ENCODE measurements at regions of chr16 and their contacts with region 1.

Region 1: GRCh38 chr16:46607529-46607928 is 13.7 kb downstream of the SHCBP1 start:
- DNase-seq: no peak
- H3K4me3 Mint-ChIP-seq: no peak overlapping the region
- H3K27ac Mint-ChIP-seq: no peak overlapping the region
- H3K4me1 Mint-ChIP-seq: no peaks in the 10 kb centered on the region
- H3K27me3 Mint-ChIP-seq: no peaks in the 10 kb centered on the region

Region 2: DNA sequence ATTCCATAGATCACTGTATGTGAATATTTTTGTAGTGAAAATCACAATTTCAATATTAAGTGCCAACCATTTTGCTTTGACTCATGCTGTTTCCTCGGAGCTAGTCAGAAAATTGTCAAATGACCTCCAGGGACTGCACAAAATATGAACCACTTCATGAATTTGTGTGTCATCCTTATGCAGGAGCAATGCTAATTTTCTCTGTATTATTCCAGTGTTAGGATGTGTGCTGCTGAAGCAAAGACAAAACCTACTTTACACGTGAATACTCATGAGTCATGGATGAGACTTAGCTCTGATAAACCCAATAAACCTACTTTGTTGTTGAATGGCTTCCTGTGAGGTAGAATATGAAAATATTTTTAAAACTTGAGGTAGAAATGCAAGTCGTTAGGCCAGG is 51.6 kb before region 1 on chr16:
- CTCF ChIA-PET with region 1: interaction called, 10 read pairs
- POLR2A ChIA-PET with region 1: no interaction called
- DNase-seq: no peak
- H3K4me3 Mint-ChIP-seq: no peak overlapping the region
- H3K27ac Mint-ChIP-seq: no peak overlapping the region
- H3K4me1 Mint-ChIP-seq: no peaks in the 10 kb centered on the region
- H3K27me3 Mint-ChIP-seq: peaks cover 10% of the 10 kb centered on the region

Region 3: GRCh38 chr16:46568472-46569230 is 38.9 kb before region 1 on chr16:
- CTCF ChIA-PET with region 1: no interaction called
- POLR2A ChIA-PET with region 1: no interaction called
- DNase-seq: no peak
- H3K4me3 Mint-ChIP-seq: no peak overlapping the region
- H3K27ac Mint-ChIP-seq: no peak overlapping the region
- H3K4me1 Mint-ChIP-seq: peaks cover 7% of the 10 kb centered on the region
- H3K27me3 Mint-ChIP-seq: peaks cover 9% of the 10 kb centered on the region

Region 4: DNA sequence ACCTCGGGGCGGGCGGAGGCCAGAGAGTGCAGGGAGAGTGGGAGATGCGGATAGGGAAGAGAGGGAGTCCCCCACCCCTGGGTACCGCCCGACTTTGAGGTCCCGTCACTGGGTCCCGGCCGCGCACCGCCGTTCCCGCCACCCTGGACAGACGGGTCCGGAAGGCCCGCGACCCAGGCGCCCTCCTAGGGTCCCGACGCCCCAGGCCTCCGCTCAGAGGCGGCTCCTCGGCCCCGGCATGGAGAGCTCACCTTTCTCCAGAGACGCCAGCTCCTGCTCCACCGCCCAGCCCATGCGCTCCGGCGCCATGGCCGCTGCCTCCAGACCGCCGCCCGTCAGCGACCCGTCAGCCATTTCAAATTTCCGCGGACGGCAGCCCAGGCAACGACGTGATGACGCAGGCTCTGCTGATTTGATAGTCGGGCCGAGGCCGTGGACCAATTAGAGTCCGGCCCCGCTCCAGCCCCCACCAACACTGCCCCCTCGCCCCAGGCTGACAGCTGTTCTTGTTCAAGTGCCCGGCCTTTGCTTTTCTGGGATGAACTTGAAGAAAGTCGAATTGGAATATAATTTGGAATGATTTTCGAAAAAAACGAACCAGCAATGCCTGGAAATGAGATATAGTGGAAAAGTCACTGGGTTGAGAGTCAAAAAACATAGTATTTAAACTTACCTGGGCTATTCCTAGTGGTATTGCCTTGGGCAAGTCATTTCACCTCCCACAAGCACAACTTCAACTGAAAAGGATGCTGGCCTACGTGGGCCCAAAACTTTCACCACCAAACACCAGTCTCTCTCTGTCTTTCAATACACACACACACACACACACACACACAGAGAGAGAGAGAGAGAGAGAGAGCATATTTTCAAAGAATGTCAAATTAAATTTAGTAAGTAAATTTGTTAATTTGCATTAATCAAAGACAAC is 13.7 kb after region 1 on chr16 and contains the start of gene SHCBP1:
- CTCF ChIA-PET with region 1: interaction called, 9 read pairs
- POLR2A ChIA-PET with region 1: interaction called, 11 read pairs
- DNase-seq: peak; percentile 89
- H3K4me3 Mint-ChIP-seq: peak within 1 kb of the TSS; percentile 93
- H3K27ac Mint-ChIP-seq: peak within 1 kb of the TSS; percentile 91
- H3K4me1 Mint-ChIP-seq: peaks cover 35% of the 10 kb centered on the region
- H3K27me3 Mint-ChIP-seq: no peaks in the 10 kb centered on the region
- total RNA-seq, gene SHCBP1: 51.0 to 52.5 TPM